ENCODE measurements at regions of chr17 and their contacts with region 1.

Region 1: DNA sequence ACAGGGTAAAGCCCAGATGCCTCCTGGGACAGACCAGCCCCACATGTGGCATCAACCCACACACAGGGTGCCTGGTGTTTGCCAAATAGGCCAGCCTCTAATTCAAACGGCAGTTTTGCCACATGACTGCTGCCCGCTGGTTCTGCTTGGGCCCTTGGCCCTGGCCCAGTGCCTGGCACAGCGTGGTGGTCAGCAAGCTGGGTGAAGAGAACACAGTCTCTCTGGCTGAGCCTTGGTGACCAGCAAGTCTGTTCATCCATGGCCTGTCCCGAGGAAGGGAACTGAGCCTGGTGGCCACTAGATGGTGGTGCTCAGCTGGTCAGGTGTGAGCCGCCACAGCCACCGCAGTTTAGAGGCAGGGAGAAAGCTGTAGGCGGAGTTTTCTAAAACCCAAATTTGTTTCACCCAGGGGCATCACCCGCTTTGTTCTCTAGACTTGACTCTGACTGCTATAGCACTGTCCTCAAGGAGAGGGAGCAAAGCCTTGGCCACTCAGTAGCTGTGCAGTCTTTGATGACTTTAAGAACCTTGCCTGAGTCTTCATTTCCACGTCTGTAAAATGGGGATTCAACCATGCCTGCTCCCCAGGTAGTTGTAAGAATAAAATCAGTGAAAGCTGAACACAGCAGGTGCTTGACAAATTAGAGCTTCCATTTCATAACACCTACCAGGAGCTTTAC is 4.7 kb upstream of the GFAP start:
- DNase-seq: peak; percentile 29 to 78 (median 48)
- ATAC-seq: peak; percentile 93
- H3K4me3 ChIP-seq: no peak overlapping the region
- H3K4me3 Mint-ChIP-seq: no peak overlapping the region
- H3K27ac ChIP-seq: no peak overlapping the region
- H3K27ac Mint-ChIP-seq: no peak overlapping the region
- H3K4me1 ChIP-seq: no peaks in the 10 kb centered on the region
- H3K4me1 Mint-ChIP-seq: no peaks in the 10 kb centered on the region
- H3K27me3 ChIP-seq: peaks cover 0 to 11% of the 10 kb centered on the region in 2 experiments
- H3K27me3 Mint-ChIP-seq: peaks cover 16% of the 10 kb centered on the region
- CTCF ChIP-seq: peak; percentile 44

Region 2: GRCh38 chr17:45021607-45022287 is 101.7 kb after region 1 on chr17:
- CTCF ChIA-PET with region 1: interaction called, 22 read pairs
- POLR2A ChIA-PET with region 1: interaction called, 5 read pairs
- intact Hi-C with region 1: loop called (anchors 1 kb)
- DNase-seq: peak; percentile 29 to 85 (median 58)
- ATAC-seq: peak; percentile 85
- H3K4me3 ChIP-seq: peak overlapping the region; percentile 44
- H3K4me3 Mint-ChIP-seq: peak overlapping the region; percentile 39
- H3K27ac ChIP-seq: no peak overlapping the region
- H3K27ac Mint-ChIP-seq: no peak overlapping the region
- H3K4me1 ChIP-seq: peaks cover 36% of the 10 kb centered on the region
- H3K4me1 Mint-ChIP-seq: peaks cover 24% of the 10 kb centered on the region
- H3K27me3 ChIP-seq: peaks cover 34 to 40% of the 10 kb centered on the region in 2 experiments
- H3K27me3 Mint-ChIP-seq: peaks cover 39% of the 10 kb centered on the region
- CTCF ChIP-seq: peak; percentile 66

Region 3: DNA sequence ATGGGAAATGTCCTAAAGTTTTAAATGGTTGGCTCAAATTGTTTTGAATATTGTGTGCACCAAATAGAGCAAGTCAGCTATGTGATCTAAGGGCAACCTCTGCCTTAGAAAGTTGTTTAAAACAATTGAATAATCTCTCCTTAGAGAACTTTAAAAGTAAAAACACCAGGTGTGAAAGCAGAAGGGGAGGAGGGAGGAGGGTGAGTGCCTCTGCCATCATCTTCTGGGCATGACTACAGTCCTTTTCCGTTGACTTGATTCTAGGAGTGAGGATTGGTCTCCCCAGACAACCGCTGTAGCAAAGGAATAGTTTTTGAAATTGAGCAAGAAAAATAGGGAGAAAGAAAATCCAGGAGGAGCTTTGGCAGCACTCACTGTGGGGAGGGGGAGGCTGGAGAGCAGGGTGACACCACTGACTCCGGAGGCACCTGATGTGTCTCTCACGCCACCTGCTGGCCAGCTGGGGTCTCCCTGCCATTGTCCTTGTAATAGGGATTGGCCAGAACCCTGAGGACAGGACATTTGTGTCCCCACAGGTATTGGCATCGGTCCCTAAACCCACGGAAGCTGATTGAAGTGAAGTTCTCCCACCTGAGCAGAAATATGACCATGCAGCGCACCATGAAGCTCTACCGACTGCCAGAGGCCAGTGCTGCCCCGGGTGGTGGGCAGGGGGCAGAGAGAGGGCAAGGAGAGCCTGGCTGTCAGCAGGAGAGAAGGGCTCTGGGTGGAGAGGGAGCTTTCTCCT is 179.0 kb after region 1 on chr17:
- CTCF ChIA-PET with region 1: interaction called, 6 read pairs
- POLR2A ChIA-PET with region 1: no interaction called
- intact Hi-C with region 1: loop called in 1 of 2 experiments (anchors 2 kb)
- DNase-seq: peak; percentile 61 to 86 (median 72)
- ATAC-seq: peak; percentile 90
- H3K4me3 ChIP-seq: no peak overlapping the region
- H3K4me3 Mint-ChIP-seq: no peak overlapping the region
- H3K27ac ChIP-seq: no peak overlapping the region
- H3K27ac Mint-ChIP-seq: no peak overlapping the region
- H3K4me1 ChIP-seq: no peaks in the 10 kb centered on the region
- H3K4me1 Mint-ChIP-seq: peaks cover 7% of the 10 kb centered on the region
- H3K27me3 ChIP-seq: no peaks in the 10 kb centered on the region
- H3K27me3 Mint-ChIP-seq: no peaks in the 10 kb centered on the region
- CTCF ChIP-seq: peak; percentile 91

Region 4: GRCh38 chr17:45197555-45198334 is 277.7 kb after region 1 on chr17:
- CTCF ChIA-PET with region 1: no interaction called
- POLR2A ChIA-PET with region 1: no interaction called
- intact Hi-C with region 1: loop called (anchors 10 kb)
- DNase-seq: peak; percentile 72 to 91 (median 84)
- ATAC-seq: peak; percentile 100
- H3K4me3 ChIP-seq: no peak overlapping the region
- H3K4me3 Mint-ChIP-seq: no peak overlapping the region
- H3K27ac ChIP-seq: no peak overlapping the region
- H3K27ac Mint-ChIP-seq: no peak overlapping the region
- H3K4me1 ChIP-seq: peaks cover 8% of the 10 kb centered on the region
- H3K4me1 Mint-ChIP-seq: peaks cover 3% of the 10 kb centered on the region
- H3K27me3 ChIP-seq: no peaks in the 10 kb centered on the region
- H3K27me3 Mint-ChIP-seq: no peaks in the 10 kb centered on the region
- CTCF ChIP-seq: peak; percentile 92